Activated T-helper 1 cell treated with anti-CD3 and anti-CD28 coated beads, Interleukin-12 subunit alpha, Interleukin-12 subunit beta, Interleukin-2, Interleukin-4 antibody, amounts not matched to agents 30 ng/mL and 10 ng/mL and 1 ng/mL, durations not matched to agents 14 hours and 24 hours and 36 hours (primary cell): ENCODE measurements at regions of chr14 and their contacts with region 1.

Region 1: DNA sequence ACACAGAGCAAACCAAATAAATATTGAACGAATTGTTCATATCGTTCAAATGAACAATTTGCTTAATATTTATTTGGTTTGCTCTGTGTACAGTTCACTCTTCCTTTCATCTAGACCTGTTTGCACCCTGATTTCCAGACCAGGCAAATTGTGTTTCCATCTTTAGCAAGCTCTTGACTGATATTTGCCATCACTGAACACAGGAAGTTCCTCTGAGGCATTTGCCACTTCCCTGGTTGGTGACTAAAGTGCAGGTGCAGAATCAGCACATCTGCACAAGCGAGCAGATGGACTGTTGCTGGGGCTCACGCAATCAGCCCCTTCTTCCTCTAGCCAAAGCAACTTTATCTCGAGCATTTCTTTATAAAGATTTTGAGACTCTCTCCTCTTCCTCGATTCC is 112.9 kb downstream of the DAAM1 start:
- DNase-seq: peak; percentile 4
- H3K4me3 Mint-ChIP-seq: peak overlapping the region; percentile 44
- H3K27ac Mint-ChIP-seq: peak overlapping the region; percentile 5
- H3K4me1 Mint-ChIP-seq: peaks cover 42% of the 10 kb centered on the region
- H3K27me3 Mint-ChIP-seq: no peaks in the 10 kb centered on the region

Region 2: DNA sequence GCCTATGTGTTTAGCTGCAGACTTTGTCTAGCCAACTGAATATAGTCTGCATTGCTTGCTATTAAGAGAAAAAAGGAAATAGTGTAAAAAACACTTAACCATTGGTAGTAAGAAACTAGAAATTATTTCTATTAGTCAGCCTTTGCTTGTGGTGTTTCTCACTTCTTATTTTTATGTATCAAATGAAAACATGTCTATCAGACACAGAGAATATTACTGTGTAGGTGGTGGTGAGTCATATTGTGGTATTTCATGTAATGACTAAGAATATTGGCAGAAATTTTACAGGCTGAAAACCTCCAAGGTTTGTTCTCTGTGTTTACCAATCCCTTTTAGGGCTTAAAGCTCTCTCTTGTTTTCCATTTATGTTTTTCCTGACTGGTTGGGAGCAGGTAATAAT is 25.7 kb before region 1 on chr14:
- intact Hi-C with region 1: loop called (anchors 1 kb)
- DNase-seq: no peak
- H3K4me3 Mint-ChIP-seq: no peak overlapping the region
- H3K27ac Mint-ChIP-seq: no peak overlapping the region
- H3K4me1 Mint-ChIP-seq: peaks cover 23% of the 10 kb centered on the region
- H3K27me3 Mint-ChIP-seq: peaks cover 3% of the 10 kb centered on the region

Region 3: GRCh38 chr14:59283361-59283760 is 18.0 kb before region 1 on chr14:
- intact Hi-C with region 1: loop called (anchors 1 kb)
- DNase-seq: no peak
- H3K4me3 Mint-ChIP-seq: no peak overlapping the region
- H3K27ac Mint-ChIP-seq: no peak overlapping the region
- H3K4me1 Mint-ChIP-seq: peaks cover 20% of the 10 kb centered on the region
- H3K27me3 Mint-ChIP-seq: peaks cover 5% of the 10 kb centered on the region